Mammary epithelial cell (primary cell): ENCODE measurements at regions of chr6 and their contacts with region 1.

Region 1: DNA sequence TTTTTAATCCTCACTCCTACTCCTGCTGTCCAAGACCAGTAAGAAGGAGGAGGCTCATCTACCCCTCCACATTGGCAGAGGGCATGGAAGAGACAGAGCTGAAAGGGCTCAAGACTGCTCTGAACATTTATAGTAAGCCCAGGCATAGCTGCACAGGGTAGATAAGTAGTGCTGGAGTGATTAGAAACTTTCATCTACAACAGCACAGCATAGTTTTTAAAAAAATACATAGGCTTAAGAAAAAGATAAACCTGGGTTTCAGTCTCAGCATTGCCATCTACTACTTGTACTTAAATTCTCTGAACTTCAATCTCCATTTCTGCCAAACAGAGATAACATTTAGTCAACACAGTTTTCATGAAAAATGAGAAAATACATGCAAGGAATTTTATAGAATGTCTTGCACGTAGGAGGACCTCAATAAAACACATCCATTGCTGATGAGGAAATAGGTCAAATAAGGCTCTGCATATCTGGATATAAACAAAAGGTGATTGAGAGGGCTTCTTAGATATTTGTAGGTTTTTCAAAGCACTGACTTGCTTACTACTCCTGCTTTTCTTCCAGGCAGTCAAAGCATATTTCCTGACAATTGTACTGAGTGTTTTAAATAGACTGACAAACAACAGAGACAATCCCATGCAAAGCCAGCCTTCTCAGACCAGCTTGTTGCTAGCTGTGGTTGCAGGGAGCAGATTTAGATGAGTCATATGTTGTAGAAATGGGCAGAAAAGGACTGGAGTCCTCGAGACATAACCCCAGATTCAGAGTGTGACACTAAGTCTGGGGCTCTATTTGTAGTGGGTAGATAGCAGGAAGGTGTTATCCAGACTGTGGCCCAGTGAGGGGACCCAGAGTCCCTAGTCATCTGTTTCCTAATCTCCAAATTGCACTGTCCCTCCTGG is 107.4 kb upstream of the TAB2 start:
- DNase-seq: peak; percentile 44
- H3K4me3 ChIP-seq: no peak overlapping the region
- H3K27ac ChIP-seq: no peak overlapping the region
- H3K4me1 ChIP-seq: no peaks in the 10 kb centered on the region
- H3K27me3 ChIP-seq: no peaks in the 10 kb centered on the region
- CTCF ChIP-seq: no peak

Region 2: DNA sequence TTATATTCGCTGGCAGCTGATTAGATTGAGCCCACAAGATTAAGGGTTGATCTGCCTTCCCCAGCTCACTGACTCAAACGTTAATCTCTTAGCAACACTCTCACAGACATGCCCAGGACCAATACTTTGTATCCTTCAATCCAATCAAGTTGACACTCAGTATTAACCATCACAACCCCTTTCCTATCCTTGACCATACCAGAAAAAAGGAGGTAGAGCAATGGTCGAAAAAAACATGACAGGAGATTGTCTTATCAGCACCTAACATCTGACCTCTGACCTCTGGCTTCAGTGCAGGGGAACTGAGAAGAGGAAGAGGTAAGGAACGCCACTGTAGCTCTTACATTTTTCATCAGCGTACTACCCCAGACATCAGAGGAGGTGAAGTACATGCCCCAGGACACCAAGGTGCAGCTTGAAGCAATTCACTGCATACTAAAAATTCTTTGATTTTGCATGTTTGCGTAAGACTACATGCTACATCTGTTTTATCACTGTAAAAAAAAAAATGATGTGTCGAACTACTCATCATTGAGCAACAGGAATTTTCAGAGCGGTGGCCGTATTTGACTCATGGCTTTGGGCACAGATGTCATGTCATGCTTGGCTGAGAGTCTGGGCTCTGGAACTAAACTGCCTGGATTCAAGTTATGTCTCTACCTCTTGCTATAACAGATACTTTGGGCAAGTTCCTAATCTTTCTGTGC is 80.6 kb before region 1 on chr6:
- CTCF ChIA-PET with region 1: no interaction called
- dilution Hi-C with region 1: loop called (anchors 5 kb)
- in situ Hi-C with region 1: no loop called
- intact Hi-C with region 1: no loop called
- DNase-seq: peak; percentile 73
- H3K4me3 ChIP-seq: no peak overlapping the region
- H3K27ac ChIP-seq: no peak overlapping the region
- H3K4me1 ChIP-seq: peaks cover 3% of the 10 kb centered on the region
- H3K27me3 ChIP-seq: no peaks in the 10 kb centered on the region
- CTCF ChIP-seq: no peak